Upper lobe of right lung (tissue), 1 donor: ENCODE measurements at regions of chr19 and their contacts with region 1.

Region 1: DNA sequence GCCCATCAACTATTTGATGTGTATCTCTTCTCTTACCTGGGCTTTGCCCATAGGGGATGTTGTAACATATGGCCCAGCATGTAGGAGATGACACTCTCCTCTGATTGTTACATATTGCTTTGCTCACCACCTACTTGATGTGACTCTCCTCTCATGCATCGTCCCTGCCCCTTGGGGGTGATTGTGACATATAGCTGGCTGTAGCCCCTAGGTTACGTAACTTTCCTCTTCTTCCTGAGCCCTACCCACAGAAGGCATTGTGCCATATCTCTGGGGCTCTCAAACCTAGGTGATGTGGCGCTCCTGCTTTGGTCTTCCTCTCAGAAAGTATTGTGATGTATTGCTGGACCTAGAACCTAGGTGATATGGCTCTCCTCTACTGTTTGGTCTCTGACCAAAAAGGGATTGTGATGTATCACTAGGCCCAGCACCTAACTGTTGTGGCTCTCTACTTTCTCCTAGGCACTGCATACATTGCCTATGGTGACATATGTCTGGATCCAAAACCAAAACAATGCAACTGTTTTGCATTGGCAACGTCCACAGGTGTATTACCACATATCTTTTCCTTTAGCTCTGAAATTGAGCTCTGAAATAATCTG is 71.9 kb upstream of the ZNF724 start:
- DNase-seq: no peak
- ATAC-seq: no peak
- H3K4me3 ChIP-seq: no peak overlapping the region
- H3K27ac ChIP-seq: no peak overlapping the region
- H3K4me1 ChIP-seq: no peaks in the 10 kb centered on the region
- H3K27me3 ChIP-seq: no peaks in the 10 kb centered on the region
- CTCF ChIP-seq: no peak

Region 2: GRCh38 chr19:23273590-23274413 is 48.2 kb before region 1 on chr19:
- intact Hi-C with region 1: no loop called
- DNase-seq: peak; percentile 95
- ATAC-seq: peak; percentile 100
- H3K4me3 ChIP-seq: peak overlapping the region; percentile 93
- H3K27ac ChIP-seq: peak overlapping the region; percentile 90
- H3K4me1 ChIP-seq: peaks cover 9% of the 10 kb centered on the region
- H3K27me3 ChIP-seq: no peaks in the 10 kb centered on the region
- CTCF ChIP-seq: peak; percentile 3

Region 3: DNA sequence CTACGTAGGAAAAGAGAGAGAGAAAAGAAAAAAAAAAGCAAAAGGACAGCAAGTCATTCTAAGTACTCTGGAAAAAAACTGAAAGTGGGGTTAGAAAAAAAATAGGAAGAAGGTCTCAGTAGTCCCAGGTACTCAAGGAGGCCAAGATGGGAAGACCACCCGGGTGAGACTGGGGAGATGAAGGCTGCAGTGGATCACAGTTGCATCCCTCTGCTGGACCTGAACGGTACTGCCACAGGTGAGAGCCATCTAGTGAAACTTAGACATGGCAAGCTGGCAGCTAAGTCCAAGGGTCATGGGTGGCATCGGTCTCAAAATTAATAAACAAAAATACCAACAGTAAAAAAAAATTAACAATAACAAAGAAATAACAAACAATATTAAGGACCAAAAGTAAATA is 114.3 kb after region 1 on chr19:
- intact Hi-C with region 1: no loop called
- DNase-seq: no peak
- ATAC-seq: no peak
- H3K4me3 ChIP-seq: no peak overlapping the region
- H3K27ac ChIP-seq: no peak overlapping the region
- H3K4me1 ChIP-seq: no peaks in the 10 kb centered on the region
- H3K27me3 ChIP-seq: no peaks in the 10 kb centered on the region
- CTCF ChIP-seq: no peak

Region 4: GRCh38 chr19:23460641-23461040 is 138.6 kb after region 1 on chr19:
- intact Hi-C with region 1: no loop called
- DNase-seq: no peak
- ATAC-seq: no peak
- H3K4me3 ChIP-seq: no peak overlapping the region
- H3K27ac ChIP-seq: no peak overlapping the region
- H3K4me1 ChIP-seq: no peaks in the 10 kb centered on the region
- H3K27me3 ChIP-seq: no peaks in the 10 kb centered on the region
- CTCF ChIP-seq: no peak

Region 5: GRCh38 chr19:23470873-23471545 is 149.0 kb after region 1 on chr19:
- intact Hi-C with region 1: loop called (anchors 2 kb)
- DNase-seq: no peak
- ATAC-seq: no peak
- H3K4me3 ChIP-seq: no peak overlapping the region
- H3K27ac ChIP-seq: no peak overlapping the region
- H3K4me1 ChIP-seq: no peaks in the 10 kb centered on the region
- H3K27me3 ChIP-seq: no peaks in the 10 kb centered on the region
- CTCF ChIP-seq: no peak

Region 6: DNA sequence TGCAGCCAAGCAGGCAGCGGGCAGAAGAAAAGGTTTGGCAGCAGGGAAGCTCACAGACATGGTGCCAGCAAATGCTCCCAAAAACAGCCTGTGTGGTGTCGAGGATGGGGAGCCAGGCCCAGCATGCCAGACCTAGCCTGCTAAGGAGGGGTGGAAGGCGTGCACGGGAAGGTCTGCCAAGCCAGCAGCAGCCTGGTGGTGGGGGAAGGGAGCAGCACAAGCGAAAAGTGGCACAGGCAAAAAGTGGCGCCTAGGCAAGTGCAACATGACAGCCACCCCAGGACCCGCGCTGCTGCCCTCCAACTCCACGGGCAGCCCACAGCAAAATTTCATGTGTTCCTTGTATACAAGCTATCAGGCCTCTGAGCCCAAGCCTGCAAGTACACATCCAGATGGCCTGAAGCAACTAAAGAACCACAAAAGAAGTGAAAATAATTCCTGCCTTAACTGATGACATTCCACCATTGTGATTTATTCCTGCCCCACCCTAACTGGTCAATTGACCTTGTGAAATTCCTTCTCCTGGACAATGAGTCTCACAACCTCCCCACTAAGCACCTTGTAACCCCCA is 227.2 kb after region 1 on chr19:
- intact Hi-C with region 1: no loop called
- DNase-seq: no peak
- ATAC-seq: no peak
- H3K4me3 ChIP-seq: no peak overlapping the region
- H3K27ac ChIP-seq: no peak overlapping the region
- H3K4me1 ChIP-seq: no peaks in the 10 kb centered on the region
- H3K27me3 ChIP-seq: no peaks in the 10 kb centered on the region
- CTCF ChIP-seq: no peak